ENCODE measurements at regions of chr9 and their contacts with region 1.

Region 1: DNA sequence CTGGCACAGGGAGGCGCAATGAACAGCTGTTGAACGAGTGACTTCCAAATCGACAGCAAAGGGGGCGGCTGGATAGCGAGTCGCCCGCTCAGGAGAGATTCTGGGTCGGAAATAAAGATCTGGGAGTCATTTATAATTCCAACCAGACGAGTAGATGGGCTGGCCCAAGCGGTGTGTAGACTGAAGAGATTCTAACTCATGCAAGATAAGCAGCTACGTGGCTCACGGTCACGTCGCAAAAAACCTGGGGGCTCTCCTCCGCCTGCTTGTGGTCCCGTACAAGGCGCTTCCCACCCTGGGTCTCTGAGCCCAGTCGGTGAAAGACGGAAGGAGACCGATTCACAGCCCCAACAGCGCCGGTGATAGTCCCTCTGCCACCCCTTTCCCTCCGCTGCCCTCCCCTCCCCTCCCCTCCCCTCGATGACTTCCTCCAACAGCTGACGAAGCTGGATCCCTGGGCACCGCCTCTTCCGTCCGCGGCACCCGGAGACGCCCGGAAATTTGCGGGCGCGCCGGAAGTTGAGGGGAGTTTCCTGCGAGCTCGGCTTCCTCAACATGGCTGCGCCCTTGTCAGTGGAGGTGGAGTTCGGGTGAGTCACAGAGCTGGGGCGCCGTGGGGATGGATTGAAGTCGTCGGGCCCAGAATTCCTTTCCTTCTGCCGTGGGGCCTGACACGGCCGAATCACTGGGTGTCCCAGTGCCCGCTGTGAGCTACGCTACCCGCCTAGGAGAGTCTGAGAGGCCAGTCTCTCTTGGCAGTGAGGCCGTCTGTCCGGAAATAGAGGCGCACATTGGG is at the start of gene URM1:
- DNase-seq: peak; percentile 88 to 97 (median 95)
- ATAC-seq: peak; percentile 98
- H3K4me3 ChIP-seq: peak within 1 kb of the TSS; percentile 92
- H3K4me3 Mint-ChIP-seq: peak within 1 kb of the TSS; percentile 86 to 99 (median 96)
- H3K27ac ChIP-seq: peak within 1 kb of the TSS; percentile 94
- H3K27ac Mint-ChIP-seq: peak within 1 kb of the TSS; percentile 94 to 99 (median 98)
- H3K4me1 ChIP-seq: peaks cover 17% of the 10 kb centered on the region in 2 donors
- H3K4me1 Mint-ChIP-seq: peaks cover 18 to 41% (median 36%) of the 10 kb centered on the region in 7 donors
- H3K27me3 ChIP-seq: no peaks in the 10 kb centered on the region
- H3K27me3 Mint-ChIP-seq: no peaks in the 10 kb centered on the region
- total RNA-seq, gene URM1: 32.3 to 72.4 (median 47.5) TPM

Region 2: GRCh38 chr9:128249908-128250838 is 120.9 kb before region 1 on chr9:
- CTCF ChIA-PET with region 1: no interaction called
- POLR2A ChIA-PET with region 1: no interaction called
- intact Hi-C with region 1: loop called in 1 of 2 experiments (anchors 1 kb)
- DNase-seq: peak; percentile 96 to 100 (median 98)
- ATAC-seq: peak; percentile 98
- H3K4me3 ChIP-seq: peak overlapping the region; percentile 83
- H3K4me3 Mint-ChIP-seq: peak overlapping the region; percentile 79 to 93 (median 88)
- H3K27ac ChIP-seq: peak overlapping the region; percentile 72
- H3K27ac Mint-ChIP-seq: peak overlapping the region; percentile 60 to 97 (median 95)
- H3K4me1 ChIP-seq: peaks cover 7 to 9% of the 10 kb centered on the region in 2 donors
- H3K4me1 Mint-ChIP-seq: peaks cover 7 to 28% (median 17%) of the 10 kb centered on the region in 7 donors
- H3K27me3 ChIP-seq: no peaks in the 10 kb centered on the region
- H3K27me3 Mint-ChIP-seq: peaks cover 0 to 39% (median 6%) of the 10 kb centered on the region in 5 donors

Region 3: GRCh38 chr9:128339771-128340690 is 31.0 kb before region 1 on chr9 and contains the start of gene SLC27A4:
- CTCF ChIA-PET with region 1: interaction called, 6 read pairs
- POLR2A ChIA-PET with region 1: interaction called, 3 read pairs
- intact Hi-C with region 1: loop called (anchors 1 kb)
- DNase-seq: peak; percentile 75 to 86 (median 82)
- ATAC-seq: peak; percentile 96
- H3K4me3 ChIP-seq: peak within 1 kb of the TSS; percentile 66
- H3K4me3 Mint-ChIP-seq: peak within 1 kb of the TSS; percentile 87 to 98 (median 95)
- H3K27ac ChIP-seq: peak within 1 kb of the TSS; percentile 69
- H3K27ac Mint-ChIP-seq: peak within 1 kb of the TSS; percentile 70 to 93 (median 90)
- H3K4me1 ChIP-seq: peaks cover 4 to 12% of the 10 kb centered on the region in 2 donors
- H3K4me1 Mint-ChIP-seq: peaks cover 6 to 11% (median 9%) of the 10 kb centered on the region in 7 donors
- H3K27me3 ChIP-seq: no peaks in the 10 kb centered on the region
- H3K27me3 Mint-ChIP-seq: no peaks in the 10 kb centered on the region
- total RNA-seq, gene SLC27A4: 6.4 to 20.1 (median 12.1) TPM

Region 4: GRCh38 chr9:128521956-128522355 is 150.9 kb after region 1 on chr9:
- CTCF ChIA-PET with region 1: no interaction called
- POLR2A ChIA-PET with region 1: no interaction called
- intact Hi-C with region 1: no loop called
- DNase-seq: no peak
- ATAC-seq: no peak
- H3K4me3 ChIP-seq: no peak overlapping the region
- H3K4me3 Mint-ChIP-seq: no peak overlapping the region
- H3K27ac ChIP-seq: no peak overlapping the region
- H3K27ac Mint-ChIP-seq: peak overlapping the region in 1 of 9 donors; percentile 4
- H3K4me1 ChIP-seq: no peaks in the 10 kb centered on the region
- H3K4me1 Mint-ChIP-seq: peaks cover 0 to 14% (median 0%) of the 10 kb centered on the region in 7 donors
- H3K27me3 ChIP-seq: no peaks in the 10 kb centered on the region
- H3K27me3 Mint-ChIP-seq: no peaks in the 10 kb centered on the region

Region 5: GRCh38 chr9:128786681-128787601 is 415.9 kb after region 1 on chr9 and contains the start of gene TBC1D13:
- CTCF ChIA-PET with region 1: no interaction called
- POLR2A ChIA-PET with region 1: no interaction called
- intact Hi-C with region 1: loop called in 1 of 2 experiments (anchors 1 kb)
- DNase-seq: peak; percentile 88 to 93 (median 92)
- ATAC-seq: peak; percentile 99
- H3K4me3 ChIP-seq: peak within 1 kb of the TSS; percentile 90
- H3K4me3 Mint-ChIP-seq: peak within 1 kb of the TSS; percentile 80 to 98 (median 92)
- H3K27ac ChIP-seq: peak within 1 kb of the TSS; percentile 82
- H3K27ac Mint-ChIP-seq: peak within 1 kb of the TSS; percentile 87 to 98 (median 95)
- H3K4me1 ChIP-seq: peaks cover 13% of the 10 kb centered on the region in 2 donors
- H3K4me1 Mint-ChIP-seq: peaks cover 6 to 29% (median 23%) of the 10 kb centered on the region in 7 donors
- H3K27me3 ChIP-seq: no peaks in the 10 kb centered on the region
- H3K27me3 Mint-ChIP-seq: no peaks in the 10 kb centered on the region
- total RNA-seq, gene TBC1D13: 21.0 to 35.2 (median 24.9) TPM

Region 6: GRCh38 chr9:129028192-129028957 is 657.4 kb after region 1 on chr9 and contains the start of gene SH3GLB2:
- CTCF ChIA-PET with region 1: no interaction called
- POLR2A ChIA-PET with region 1: interaction called, 3 read pairs
- intact Hi-C with region 1: loop called in 1 of 2 experiments (anchors 1 kb)
- DNase-seq: peak in 8 of 9 donors; percentile 81 to 97 (median 88)
- ATAC-seq: peak; percentile 94
- H3K4me3 ChIP-seq: peak within 1 kb of the TSS; percentile 76
- H3K4me3 Mint-ChIP-seq: peak within 1 kb of the TSS; percentile 81 to 92 (median 83)
- H3K27ac ChIP-seq: peak within 1 kb of the TSS; percentile 72
- H3K27ac Mint-ChIP-seq: peak within 1 kb of the TSS; percentile 62 to 90 (median 78)
- H3K4me1 ChIP-seq: peaks cover 13 to 18% of the 10 kb centered on the region in 2 donors
- H3K4me1 Mint-ChIP-seq: peaks cover 13 to 37% (median 25%) of the 10 kb centered on the region in 7 donors
- H3K27me3 ChIP-seq: no peaks in the 10 kb centered on the region
- H3K27me3 Mint-ChIP-seq: no peaks in the 10 kb centered on the region
- total RNA-seq, gene SH3GLB2: 76.3 to 106 (median 86.2) TPM

Region 7: GRCh38 chr9:129802851-129803675 is 1432.0 kb after region 1 on chr9 and contains the start of gene TOR1B:
- CTCF ChIA-PET with region 1: no interaction called
- POLR2A ChIA-PET with region 1: no interaction called
- intact Hi-C with region 1: loop called in 1 of 2 experiments (anchors 2 kb)
- DNase-seq: peak; percentile 91 to 97 (median 94)
- ATAC-seq: peak; percentile 97
- H3K4me3 ChIP-seq: peak within 1 kb of the TSS; percentile 73
- H3K4me3 Mint-ChIP-seq: peak within 1 kb of the TSS; percentile 87 to 95 (median 90)
- H3K27ac ChIP-seq: peak within 1 kb of the TSS; percentile 79
- H3K27ac Mint-ChIP-seq: peak within 1 kb of the TSS; percentile 85 to 97 (median 94)
- H3K4me1 ChIP-seq: peaks cover 12 to 20% of the 10 kb centered on the region in 2 donors
- H3K4me1 Mint-ChIP-seq: peaks cover 15 to 34% (median 28%) of the 10 kb centered on the region in 7 donors
- H3K27me3 ChIP-seq: no peaks in the 10 kb centered on the region
- H3K27me3 Mint-ChIP-seq: no peaks in the 10 kb centered on the region
- total RNA-seq, gene TOR1B: 16.2 to 30.9 (median 23.9) TPM

Region 8: GRCh38 chr9:130235897-130236668 is 1865.1 kb after region 1 on chr9:
- CTCF ChIA-PET with region 1: no interaction called
- POLR2A ChIA-PET with region 1: no interaction called
- intact Hi-C with region 1: no loop called
- DNase-seq: peak; percentile 41 to 79 (median 63)
- ATAC-seq: peak; percentile 79
- H3K4me3 ChIP-seq: no peak overlapping the region
- H3K4me3 Mint-ChIP-seq: peak overlapping the region in 7 of 10 donors; percentile 24 to 75 (median 54)
- H3K27ac ChIP-seq: no peak overlapping the region
- H3K27ac Mint-ChIP-seq: peak overlapping the region in 1 of 9 donors; percentile 43
- H3K4me1 ChIP-seq: peaks cover 7 to 11% of the 10 kb centered on the region in 2 donors
- H3K4me1 Mint-ChIP-seq: peaks cover 0 to 25% (median 15%) of the 10 kb centered on the region in 7 donors
- H3K27me3 ChIP-seq: no peaks in the 10 kb centered on the region
- H3K27me3 Mint-ChIP-seq: peaks cover 0 to 2% (median 0%) of the 10 kb centered on the region in 5 donors

Measured in naive thymus-derived CD4-positive, alpha-beta T cell (primary cell).